ENCODE measurements at regions of chr4 and their contacts with region 1.

Region 1: DNA sequence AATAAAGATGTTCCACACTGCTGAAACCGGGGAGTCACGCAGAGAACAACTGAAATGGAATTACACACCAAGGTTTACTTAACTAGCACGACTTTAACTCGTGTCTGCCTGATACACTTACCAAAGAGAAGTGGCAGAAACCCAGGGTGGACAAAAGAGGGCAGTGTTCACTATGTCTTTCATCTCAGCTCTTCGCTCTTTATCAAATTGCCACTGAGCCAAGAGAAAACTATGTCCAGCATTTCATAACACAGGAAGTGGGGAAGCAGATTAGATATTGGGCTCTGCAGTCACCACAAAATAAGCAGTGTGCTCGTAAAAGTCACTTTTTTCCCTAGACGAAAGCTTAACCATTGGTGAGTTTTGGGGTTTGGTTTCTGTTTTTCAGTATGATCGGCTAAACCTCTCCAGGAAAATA is 155.7 kb downstream of the CHIC2 start:
- DNase-seq: peak; percentile 77
- H3K27ac ChIP-seq: no peak overlapping the region
- CTCF ChIP-seq: peak; percentile 78

Region 2: GRCh38 chr4:53929955-53930798 is 21.5 kb after region 1 on chr4:
- CTCF ChIA-PET with region 1: interaction called, 15 read pairs
- POLR2A ChIA-PET with region 1: no interaction called
- DNase-seq: peak; percentile 82
- H3K27ac ChIP-seq: no peak overlapping the region
- CTCF ChIP-seq: peak; percentile 76

Region 3: GRCh38 chr4:54082168-54082567 is 173.5 kb after region 1 on chr4:
- CTCF ChIA-PET with region 1: no interaction called
- POLR2A ChIA-PET with region 1: no interaction called
- DNase-seq: peak; percentile 96
- H3K27ac ChIP-seq: no peak overlapping the region
- CTCF ChIP-seq: no peak

Region 4: GRCh38 chr4:54217642-54218495 is 309.2 kb after region 1 on chr4:
- CTCF ChIA-PET with region 1: interaction called, 16 read pairs
- POLR2A ChIA-PET with region 1: no interaction called
- DNase-seq: peak; percentile 77
- H3K27ac ChIP-seq: peak overlapping the region; percentile 37
- CTCF ChIP-seq: peak; percentile 90

Measured in RWPE1 (cell line).